GM10248 (cell line): ENCODE measurements at regions of chr13 and their contacts with region 1.

Region 1: GRCh38 chr13:106536244-106537034 is 977 bp upstream of the EFNB2 start:
- DNase-seq: peak; percentile 75
- CTCF ChIP-seq: peak; percentile 99

Region 2: DNA sequence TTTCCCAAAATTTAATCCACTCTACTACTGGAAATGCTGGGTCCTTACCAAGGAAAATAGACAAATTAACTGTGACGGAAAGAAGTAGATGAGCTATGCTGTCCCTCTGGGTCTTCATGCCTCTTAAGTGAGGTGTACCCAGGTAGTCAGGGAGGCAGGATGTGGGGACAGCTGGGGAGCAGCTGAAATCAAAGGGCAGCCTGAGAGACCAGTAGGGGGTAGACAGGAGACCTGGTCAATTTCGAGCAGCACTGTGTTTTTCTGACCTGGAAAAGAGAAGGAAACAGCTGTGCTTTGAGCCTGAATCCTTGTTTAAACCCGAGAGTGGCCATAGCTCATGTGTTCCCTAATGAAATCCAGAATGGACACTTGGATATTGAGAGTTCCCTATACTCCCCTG is 588.3 kb before region 1 on chr13:
- CTCF ChIA-PET with region 1: no interaction called
- POLR2A ChIA-PET with region 1: no interaction called
- DNase-seq: peak; percentile 4
- CTCF ChIP-seq: no peak

Region 3: GRCh38 chr13:106373989-106374572 is 162.4 kb before region 1 on chr13:
- CTCF ChIA-PET with region 1: no interaction called
- POLR2A ChIA-PET with region 1: no interaction called
- DNase-seq: peak; percentile 35
- CTCF ChIP-seq: no peak

Region 4: GRCh38 chr13:106488076-106488475 is 48.4 kb before region 1 on chr13:
- CTCF ChIA-PET with region 1: no interaction called
- POLR2A ChIA-PET with region 1: no interaction called
- DNase-seq: no peak
- CTCF ChIP-seq: no peak

Region 5: DNA sequence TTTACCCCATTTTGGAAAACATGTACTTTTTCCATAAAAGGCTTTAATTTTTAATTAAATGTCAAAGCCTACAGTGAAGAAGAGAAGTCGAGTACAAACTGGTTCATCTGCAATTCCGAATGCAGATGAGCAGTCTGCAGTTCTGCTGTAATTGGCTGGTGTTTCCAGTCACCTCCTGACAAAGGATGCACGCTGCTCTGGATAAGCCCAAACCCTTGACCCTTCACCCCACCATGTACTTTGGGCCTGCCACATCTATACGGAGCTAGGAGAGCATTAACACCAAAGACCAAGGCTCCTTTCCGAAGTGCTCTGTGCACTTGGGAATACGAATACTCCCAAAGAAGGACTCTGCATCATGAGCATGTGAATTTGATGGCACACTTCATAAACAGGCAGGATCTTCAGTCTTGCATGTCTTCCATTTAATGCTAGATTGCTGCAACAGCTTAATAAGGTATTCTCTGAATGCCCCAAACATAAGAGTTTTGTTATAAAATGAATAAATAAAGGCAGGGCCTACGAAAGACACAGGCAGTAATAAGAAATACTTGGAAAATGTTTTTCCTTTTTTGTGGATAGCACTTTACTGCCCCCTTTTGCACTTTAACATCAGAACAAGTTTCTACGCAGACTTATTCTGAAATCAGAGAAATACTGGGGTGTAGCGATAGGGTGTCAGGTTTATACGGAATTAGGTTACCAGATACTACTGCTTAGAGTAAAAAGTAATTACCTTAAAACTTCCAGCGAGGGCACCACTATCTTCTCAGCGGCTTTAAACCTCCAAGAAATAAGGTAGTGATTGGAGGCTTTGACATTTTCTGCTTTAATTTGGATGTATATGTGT is 16.0 kb before region 1 on chr13:
- CTCF ChIA-PET with region 1: interaction called, 10 read pairs
- POLR2A ChIA-PET with region 1: no interaction called
- DNase-seq: no peak
- CTCF ChIP-seq: no peak

Region 6: GRCh38 chr13:106555631-106556328 is 19.3 kb after region 1 on chr13:
- CTCF ChIA-PET with region 1: interaction called, 27 read pairs
- POLR2A ChIA-PET with region 1: interaction called, 3 read pairs
- DNase-seq: no peak
- CTCF ChIP-seq: no peak

Region 7: DNA sequence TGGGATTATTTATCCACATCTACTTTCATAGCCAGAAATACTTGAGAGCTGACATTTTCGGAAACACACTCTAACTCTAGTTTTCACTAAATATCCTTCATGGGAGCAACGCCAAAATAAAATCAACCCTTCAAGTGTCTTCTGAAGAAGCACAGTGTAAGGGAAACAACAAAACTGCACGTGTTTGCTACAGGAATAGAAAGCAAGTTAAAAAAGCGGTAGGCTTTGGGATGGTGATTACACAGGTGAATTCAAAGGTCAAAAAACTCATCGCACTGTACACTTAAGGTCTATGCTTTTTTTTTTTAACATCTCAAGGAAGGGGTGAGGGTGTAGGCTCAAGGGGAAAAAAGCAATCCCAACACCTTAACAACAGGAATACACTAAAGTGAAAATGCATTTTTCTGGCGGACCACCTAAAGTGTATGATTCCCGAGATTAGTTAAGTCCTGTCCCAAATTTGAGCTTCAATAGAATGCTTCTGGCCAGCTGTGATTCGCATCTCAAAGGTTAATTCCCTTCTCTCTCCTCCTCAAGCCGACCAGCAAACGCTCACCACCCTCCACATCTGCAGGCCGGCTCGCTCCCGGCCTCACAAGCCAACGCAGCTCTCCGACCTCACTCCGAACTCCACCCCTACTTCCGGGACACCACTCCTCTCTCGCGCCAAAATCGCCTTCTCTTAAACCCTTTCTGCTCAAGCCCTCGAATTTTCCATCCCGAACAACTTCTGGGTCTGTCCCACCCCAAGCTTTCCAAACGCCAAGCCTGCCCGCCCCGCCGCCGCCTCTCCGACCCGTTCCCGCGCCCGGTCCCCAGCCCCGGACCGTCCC is 30.4 kb after region 1 on chr13:
- CTCF ChIA-PET with region 1: interaction called, 31 read pairs
- POLR2A ChIA-PET with region 1: interaction called, 5 read pairs
- DNase-seq: peak; percentile 65
- CTCF ChIP-seq: no peak